Activated CD4-positive, alpha-beta T cell treated with anti-CD3 and anti-CD28 coated beads, Interleukin-2, amount 10 ng/mL, durations not matched to agents 24 days and 14 days (primary cell): ENCODE measurements at regions of chrX and their contacts with region 1.

Region 1: GRCh38 chrX:103941201-103941975 is 21.0 kb upstream of the TMSB15B start:
- DNase-seq: peak; percentile 57
- H3K4me3 Mint-ChIP-seq: no peak overlapping the region
- H3K27ac Mint-ChIP-seq: no peak overlapping the region
- H3K4me1 Mint-ChIP-seq: peaks cover 30% of the 10 kb centered on the region
- H3K27me3 Mint-ChIP-seq: no peaks in the 10 kb centered on the region

Region 2: DNA sequence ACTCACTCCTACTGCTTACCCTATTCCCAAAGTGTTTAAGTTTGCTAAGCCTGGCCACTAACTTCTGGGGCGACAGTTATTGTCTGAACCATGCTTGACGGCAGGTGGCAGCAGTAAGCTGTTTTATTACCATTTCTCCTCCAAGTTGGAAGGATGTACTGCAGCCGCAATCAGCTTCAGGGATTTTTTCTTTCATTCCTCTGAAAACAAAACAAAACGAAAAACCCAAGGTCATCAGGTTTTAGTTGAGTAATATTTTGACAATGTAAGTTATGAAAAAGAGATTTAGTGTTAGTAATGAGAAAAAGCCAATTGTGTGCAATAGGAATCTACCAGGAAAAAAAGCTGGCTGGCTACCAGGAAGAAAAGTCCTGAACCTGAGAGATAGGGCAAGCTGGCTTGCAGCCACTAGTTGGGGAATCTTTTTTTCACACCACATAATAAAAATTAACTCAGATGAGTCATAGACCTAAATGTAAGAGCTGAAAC is 96.2 kb before region 1 on chrX:
- intact Hi-C with region 1: loop called (anchors 1 kb)
- DNase-seq: peak; percentile 82
- H3K4me3 Mint-ChIP-seq: no peak overlapping the region
- H3K27ac Mint-ChIP-seq: no peak overlapping the region
- H3K4me1 Mint-ChIP-seq: peaks cover 2% of the 10 kb centered on the region
- H3K27me3 Mint-ChIP-seq: no peaks in the 10 kb centered on the region

Region 3: GRCh38 chrX:103918581-103919269 is 22.7 kb before region 1 on chrX:
- intact Hi-C with region 1: loop called (anchors 1 kb)
- DNase-seq: peak; percentile 88
- H3K4me3 Mint-ChIP-seq: peak overlapping the region; percentile 97
- H3K27ac Mint-ChIP-seq: peak overlapping the region; percentile 97
- H3K4me1 Mint-ChIP-seq: peaks cover 14% of the 10 kb centered on the region
- H3K27me3 Mint-ChIP-seq: no peaks in the 10 kb centered on the region